ENCODE measurements at regions of chr9 and their contacts with region 1.

Region 1: GRCh38 chr9:31119882-31120454 is 1264.5 kb upstream of the ACO1 start:
- DNase-seq: peak; percentile 2 to 74 (median 32)
- ATAC-seq: peak; percentile 75
- H3K4me3 ChIP-seq: no peak overlapping the region
- H3K4me3 Mint-ChIP-seq: no peak overlapping the region
- H3K27ac ChIP-seq: no peak overlapping the region
- H3K27ac Mint-ChIP-seq: no peak overlapping the region
- H3K4me1 ChIP-seq: no peaks in the 10 kb centered on the region
- H3K4me1 Mint-ChIP-seq: peaks cover 8% of the 10 kb centered on the region
- H3K27me3 ChIP-seq: no peaks in the 10 kb centered on the region
- H3K27me3 Mint-ChIP-seq: no peaks in the 10 kb centered on the region
- CTCF ChIP-seq: peak; percentile 78

Region 2: DNA sequence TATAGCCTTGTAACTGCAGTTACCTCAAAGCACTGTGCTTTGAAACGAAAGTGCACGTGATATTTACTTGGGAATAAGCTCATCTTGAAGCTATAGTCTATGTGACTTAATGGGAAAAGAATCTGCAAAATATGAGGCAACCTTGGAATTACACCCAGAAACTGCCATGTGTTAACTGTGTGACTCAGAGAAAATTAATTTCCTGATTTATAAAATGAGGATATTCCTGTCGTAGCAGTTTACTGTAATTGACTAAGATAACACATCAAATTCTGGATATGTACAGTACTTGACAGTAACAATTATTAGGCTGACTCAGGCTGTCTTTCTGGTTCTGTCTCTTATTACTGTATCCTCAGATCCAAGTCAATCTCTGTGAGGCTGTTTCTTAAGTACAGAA is 184.6 kb after region 1 on chr9:
- CTCF ChIA-PET with region 1: interaction called, 3 read pairs
- POLR2A ChIA-PET with region 1: no interaction called
- intact Hi-C with region 1: loop called (anchors 5 kb)
- DNase-seq: no peak
- ATAC-seq: no peak
- H3K4me3 ChIP-seq: no peak overlapping the region
- H3K4me3 Mint-ChIP-seq: no peak overlapping the region
- H3K27ac ChIP-seq: no peak overlapping the region
- H3K27ac Mint-ChIP-seq: no peak overlapping the region
- H3K4me1 ChIP-seq: no peaks in the 10 kb centered on the region
- H3K4me1 Mint-ChIP-seq: peaks cover 33% of the 10 kb centered on the region
- H3K27me3 ChIP-seq: no peaks in the 10 kb centered on the region
- H3K27me3 Mint-ChIP-seq: no peaks in the 10 kb centered on the region
- CTCF ChIP-seq: no peak

Region 3: GRCh38 chr9:31535651-31536050 is 415.7 kb after region 1 on chr9:
- CTCF ChIA-PET with region 1: no interaction called
- POLR2A ChIA-PET with region 1: no interaction called
- intact Hi-C with region 1: loop called in 1 of 2 experiments (anchors 5 kb)
- DNase-seq: no peak
- ATAC-seq: no peak
- H3K4me3 ChIP-seq: no peak overlapping the region
- H3K4me3 Mint-ChIP-seq: no peak overlapping the region
- H3K27ac ChIP-seq: no peak overlapping the region
- H3K27ac Mint-ChIP-seq: no peak overlapping the region
- H3K4me1 ChIP-seq: no peaks in the 10 kb centered on the region
- H3K4me1 Mint-ChIP-seq: peaks cover under 1% of the 10 kb centered on the region
- H3K27me3 ChIP-seq: no peaks in the 10 kb centered on the region
- H3K27me3 Mint-ChIP-seq: no peaks in the 10 kb centered on the region
- CTCF ChIP-seq: no peak

Region 4: DNA sequence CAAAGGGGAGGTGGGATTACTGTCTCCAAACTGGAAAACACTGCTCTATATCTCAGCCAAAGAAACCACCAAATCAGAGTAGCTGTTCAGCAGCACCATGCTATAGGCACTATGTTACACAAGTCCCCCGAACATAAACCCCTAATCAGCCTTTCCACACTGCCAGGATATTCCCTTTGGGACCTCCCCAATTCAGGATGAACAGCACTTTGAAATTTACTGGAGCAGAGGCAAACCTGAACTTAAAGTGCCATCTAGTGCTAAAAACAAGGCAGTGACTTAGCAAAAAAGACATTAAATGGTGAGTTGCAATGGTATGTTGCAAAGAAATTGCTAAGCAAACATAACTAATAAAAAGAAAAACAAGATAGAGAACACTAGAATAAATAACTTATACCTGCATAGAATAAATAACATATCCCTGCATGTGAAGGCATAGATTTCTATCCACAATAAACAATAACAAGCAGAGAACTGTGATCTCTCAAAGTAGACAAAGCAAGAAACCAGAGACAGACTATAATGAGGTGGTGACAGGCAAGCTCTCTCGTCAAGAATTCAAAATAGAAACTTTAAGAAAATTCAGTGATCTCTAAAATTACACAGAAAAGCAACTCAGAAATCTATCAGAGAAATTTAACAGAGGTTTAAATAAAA is 680.1 kb after region 1 on chr9:
- CTCF ChIA-PET with region 1: no interaction called
- POLR2A ChIA-PET with region 1: no interaction called
- intact Hi-C with region 1: loop called (anchors 1 to 2 kb)
- DNase-seq: peak in 3 of 14 experiments; percentile 39 to 43 (median 43)
- ATAC-seq: no peak
- H3K4me3 ChIP-seq: no peak overlapping the region
- H3K4me3 Mint-ChIP-seq: no peak overlapping the region
- H3K27ac ChIP-seq: no peak overlapping the region
- H3K27ac Mint-ChIP-seq: no peak overlapping the region
- H3K4me1 ChIP-seq: no peaks in the 10 kb centered on the region
- H3K4me1 Mint-ChIP-seq: peaks cover 11% of the 10 kb centered on the region
- H3K27me3 ChIP-seq: no peaks in the 10 kb centered on the region
- H3K27me3 Mint-ChIP-seq: no peaks in the 10 kb centered on the region
- CTCF ChIP-seq: peak; percentile 70

Region 5: DNA sequence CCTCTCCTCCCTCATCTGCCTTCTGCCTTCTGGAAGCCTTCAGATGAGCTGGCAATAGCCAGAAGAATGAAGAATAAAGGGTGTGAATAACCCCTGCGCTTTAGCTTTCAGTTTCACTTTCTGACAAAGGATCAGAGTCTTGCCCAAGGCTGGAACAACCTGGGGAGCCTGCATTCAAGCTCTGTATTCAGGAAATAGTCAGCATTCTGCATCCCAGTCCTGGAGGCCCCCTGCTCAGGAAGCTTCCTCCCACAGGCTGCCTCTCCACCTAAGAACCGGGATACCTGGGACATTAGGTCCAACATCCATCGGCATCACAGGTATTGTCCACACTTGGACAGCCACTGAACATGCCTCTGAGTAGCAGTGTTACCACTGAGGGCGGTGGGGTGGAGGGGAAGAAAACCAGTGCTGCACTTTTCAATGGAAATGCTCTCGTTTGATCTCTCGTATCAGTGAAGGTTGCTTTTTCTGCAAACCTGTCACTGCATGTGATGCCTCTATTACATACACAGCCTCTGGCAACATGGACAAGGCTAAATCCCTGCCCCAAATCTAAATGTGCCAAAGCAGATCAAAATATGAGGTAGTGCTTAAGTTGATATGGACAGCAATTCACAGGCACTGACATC is 1224.7 kb after region 1 on chr9:
- CTCF ChIA-PET with region 1: no interaction called
- POLR2A ChIA-PET with region 1: no interaction called
- intact Hi-C with region 1: loop called in 1 of 2 experiments (anchors 5 kb)
- DNase-seq: peak in 1 of 14 experiments; percentile 20
- ATAC-seq: no peak
- H3K4me3 ChIP-seq: no peak overlapping the region
- H3K4me3 Mint-ChIP-seq: no peak overlapping the region
- H3K27ac ChIP-seq: no peak overlapping the region
- H3K27ac Mint-ChIP-seq: no peak overlapping the region
- H3K4me1 ChIP-seq: peaks cover 6% of the 10 kb centered on the region
- H3K4me1 Mint-ChIP-seq: peaks cover 11% of the 10 kb centered on the region
- H3K27me3 ChIP-seq: no peaks in the 10 kb centered on the region
- H3K27me3 Mint-ChIP-seq: no peaks in the 10 kb centered on the region
- CTCF ChIP-seq: no peak

Measured in CD4-positive, alpha-beta T cell (primary cell).